ENCODE measurements at regions of chr9 and their contacts with region 1.

Region 1: GRCh38 chr9:36748322-36748899 is 175.7 kb downstream of the MELK start:
- DNase-seq: no peak
- H3K4me3 ChIP-seq: no peak overlapping the region
- CTCF ChIP-seq: no peak
- POLR2A ChIP-seq: no peak

Region 2: DNA sequence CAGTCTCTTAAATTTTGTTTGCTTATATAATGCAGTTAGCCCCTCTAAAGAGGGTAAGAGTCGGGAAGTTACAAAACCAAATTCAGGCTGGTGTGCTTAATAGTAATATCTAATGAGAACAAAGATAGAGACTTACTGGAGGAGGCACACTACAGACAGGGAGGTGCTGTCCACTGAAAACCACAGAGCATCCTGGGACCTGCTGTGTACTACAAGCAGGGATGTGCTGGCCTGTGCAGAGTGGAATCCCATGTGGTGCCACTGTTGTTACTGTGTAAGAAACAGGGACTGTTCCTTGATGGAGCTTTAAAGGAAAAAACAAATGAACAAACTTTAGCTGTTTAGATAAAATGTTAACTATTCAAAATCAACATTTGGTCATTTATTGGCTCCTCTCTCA is 390.8 kb before region 1 on chr9:
- intact Hi-C with region 1: no loop called
- DNase-seq: no peak
- H3K4me3 ChIP-seq: no peak overlapping the region
- CTCF ChIP-seq: no peak
- POLR2A ChIP-seq: no peak

Region 3: DNA sequence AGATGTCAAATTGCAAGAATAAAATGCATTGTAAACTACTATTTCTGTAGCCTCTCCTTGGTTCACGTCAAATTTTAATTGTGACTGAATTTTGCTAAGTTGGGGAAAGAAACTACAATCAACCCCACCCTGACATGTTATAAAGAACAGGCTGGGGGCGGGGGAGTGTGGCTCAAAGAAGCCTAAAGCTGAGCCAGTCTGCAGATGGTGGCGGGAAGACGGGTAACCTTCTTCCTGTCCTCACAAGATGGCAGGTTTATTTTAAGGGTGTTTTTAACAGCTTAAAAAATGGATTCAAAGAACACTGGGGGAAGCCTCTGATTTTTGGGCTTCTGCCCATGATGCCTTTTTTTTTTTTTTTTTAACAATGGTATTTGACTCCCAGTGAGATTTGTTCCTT is 244.3 kb before region 1 on chr9:
- intact Hi-C with region 1: no loop called
- DNase-seq: no peak
- H3K4me3 ChIP-seq: no peak overlapping the region
- CTCF ChIP-seq: no peak
- POLR2A ChIP-seq: no peak

Region 4: GRCh38 chr9:36825179-36825578 is 76.8 kb after region 1 on chr9:
- intact Hi-C with region 1: loop called (anchors 2 kb)
- DNase-seq: peak in 1 of 2 donors; percentile 46
- H3K4me3 ChIP-seq: no peak overlapping the region
- CTCF ChIP-seq: no peak
- POLR2A ChIP-seq: no peak